ENCODE measurements at regions of chr20 and their contacts with region 1.

Region 1: GRCh38 chr20:3901028-3901705 is 12.0 kb downstream of the PANK2 start:
- DNase-seq: no peak
- ATAC-seq: no peak
- H3K4me3 ChIP-seq: no peak overlapping the region
- H3K4me3 Mint-ChIP-seq: peak overlapping the region; percentile 22 to 60 (median 54)
- H3K27ac ChIP-seq: peak overlapping the region; percentile 0
- H3K27ac Mint-ChIP-seq: peak overlapping the region; percentile 75 to 82
- H3K4me1 ChIP-seq: peaks cover 5 to 65% of the 10 kb centered on the region in 2 experiments
- H3K4me1 Mint-ChIP-seq: peaks cover 78 to 90% (median 82%) of the 10 kb centered on the region in 3 donors
- H3K27me3 ChIP-seq: no peaks in the 10 kb centered on the region
- H3K27me3 Mint-ChIP-seq: no peaks in the 10 kb centered on the region

Region 2: DNA sequence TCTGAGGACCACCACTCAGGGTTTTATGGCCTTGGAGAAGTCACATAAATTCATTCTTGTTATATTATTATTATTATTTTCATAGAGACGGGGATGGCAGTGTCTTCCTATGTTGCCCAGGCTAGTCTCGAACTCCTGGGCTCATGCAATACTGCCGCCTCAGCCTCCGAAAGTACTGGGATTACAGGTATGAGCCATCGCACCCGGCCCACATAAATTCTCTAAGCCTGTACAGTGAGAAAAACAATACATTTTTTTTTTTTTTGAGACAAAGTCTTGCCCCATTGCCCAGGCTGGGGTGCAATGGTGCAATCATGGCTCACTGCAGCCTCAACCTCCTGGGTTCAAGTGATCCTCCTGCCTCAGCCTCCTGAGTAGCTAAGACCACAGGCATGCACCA is 740.7 kb before region 1 on chr20:
- CTCF ChIA-PET with region 1: no interaction called
- POLR2A ChIA-PET with region 1: interaction called in 1 of 2 experiments, 11 read pairs
- DNase-seq: no peak
- ATAC-seq: no peak
- H3K4me3 ChIP-seq: peak overlapping the region; percentile 75 to 95
- H3K4me3 Mint-ChIP-seq: peak overlapping the region; percentile 21 to 98 (median 53)
- H3K27ac ChIP-seq: peak overlapping the region; percentile 88
- H3K27ac Mint-ChIP-seq: peak overlapping the region in 1 of 2 donors; percentile 64
- H3K4me1 ChIP-seq: peaks cover 15 to 45% of the 10 kb centered on the region in 2 experiments
- H3K4me1 Mint-ChIP-seq: peaks cover 42 to 44% (median 43%) of the 10 kb centered on the region in 3 donors
- H3K27me3 ChIP-seq: peaks cover 0 to 4% of the 10 kb centered on the region in 2 experiments
- H3K27me3 Mint-ChIP-seq: no peaks in the 10 kb centered on the region

Measured in T-cell (primary cell).